Activated naive CD4-positive, alpha-beta T cell treated with anti-CD3 and anti-CD28 coated beads for 36 hours (primary cell): ENCODE measurements at regions of chr1 and their contacts with region 1.

Region 1: DNA sequence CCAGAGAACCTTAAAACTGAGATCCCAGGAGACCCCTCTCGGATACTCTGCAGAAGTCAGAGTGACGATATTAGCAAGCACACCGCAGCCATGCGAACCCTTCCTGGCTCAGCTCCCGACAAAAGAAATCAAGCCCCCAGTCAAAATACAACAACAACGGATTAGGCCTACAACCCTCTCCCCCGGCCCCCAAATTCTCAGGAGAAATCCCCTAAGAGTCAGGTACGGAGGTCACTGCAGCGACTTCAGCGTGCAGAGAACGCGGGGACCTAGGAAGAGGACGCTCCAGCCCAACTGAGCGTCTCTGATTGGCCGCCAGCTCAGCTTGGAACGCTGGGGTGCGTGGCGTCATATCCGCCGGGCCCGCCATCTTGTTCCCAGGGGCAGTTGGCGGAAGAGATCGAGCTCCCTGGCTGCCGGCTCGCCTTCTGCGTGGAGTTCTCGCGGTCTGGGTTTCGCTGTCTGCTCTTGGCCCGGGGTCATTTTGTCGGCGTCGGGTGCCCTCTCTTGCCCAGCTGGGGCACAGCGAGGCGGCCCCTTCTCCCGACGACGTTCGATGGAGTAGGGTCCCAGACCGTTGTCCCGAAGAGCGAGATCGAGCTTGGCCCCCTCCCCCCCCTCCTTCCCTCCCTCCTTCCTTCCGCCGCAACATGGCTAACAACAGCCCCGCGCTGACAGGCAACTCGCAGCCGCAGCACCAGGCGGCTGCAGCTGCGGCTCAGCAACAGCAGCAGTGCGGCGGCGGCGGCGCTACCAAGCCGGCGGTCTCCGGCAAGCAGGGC is at the start of gene PRPF38B:
- DNase-seq: peak; percentile 97
- H3K4me3 Mint-ChIP-seq: peak within 1 kb of the TSS; percentile 86
- H3K27ac Mint-ChIP-seq: peak within 1 kb of the TSS; percentile 98
- H3K4me1 Mint-ChIP-seq: peaks cover 37% of the 10 kb centered on the region
- H3K27me3 Mint-ChIP-seq: no peaks in the 10 kb centered on the region
- total RNA-seq, gene PRPF38B: 50.4 to 52.2 TPM

Region 2: GRCh38 chr1:108590957-108591356 is 101.2 kb before region 1 on chr1:
- CTCF ChIA-PET with region 1: no interaction called
- intact Hi-C with region 1: loop called (anchors 1 kb)
- DNase-seq: no peak
- H3K4me3 Mint-ChIP-seq: no peak overlapping the region
- H3K27ac Mint-ChIP-seq: no peak overlapping the region
- H3K4me1 Mint-ChIP-seq: peaks cover 33% of the 10 kb centered on the region
- H3K27me3 Mint-ChIP-seq: no peaks in the 10 kb centered on the region

Region 3: DNA sequence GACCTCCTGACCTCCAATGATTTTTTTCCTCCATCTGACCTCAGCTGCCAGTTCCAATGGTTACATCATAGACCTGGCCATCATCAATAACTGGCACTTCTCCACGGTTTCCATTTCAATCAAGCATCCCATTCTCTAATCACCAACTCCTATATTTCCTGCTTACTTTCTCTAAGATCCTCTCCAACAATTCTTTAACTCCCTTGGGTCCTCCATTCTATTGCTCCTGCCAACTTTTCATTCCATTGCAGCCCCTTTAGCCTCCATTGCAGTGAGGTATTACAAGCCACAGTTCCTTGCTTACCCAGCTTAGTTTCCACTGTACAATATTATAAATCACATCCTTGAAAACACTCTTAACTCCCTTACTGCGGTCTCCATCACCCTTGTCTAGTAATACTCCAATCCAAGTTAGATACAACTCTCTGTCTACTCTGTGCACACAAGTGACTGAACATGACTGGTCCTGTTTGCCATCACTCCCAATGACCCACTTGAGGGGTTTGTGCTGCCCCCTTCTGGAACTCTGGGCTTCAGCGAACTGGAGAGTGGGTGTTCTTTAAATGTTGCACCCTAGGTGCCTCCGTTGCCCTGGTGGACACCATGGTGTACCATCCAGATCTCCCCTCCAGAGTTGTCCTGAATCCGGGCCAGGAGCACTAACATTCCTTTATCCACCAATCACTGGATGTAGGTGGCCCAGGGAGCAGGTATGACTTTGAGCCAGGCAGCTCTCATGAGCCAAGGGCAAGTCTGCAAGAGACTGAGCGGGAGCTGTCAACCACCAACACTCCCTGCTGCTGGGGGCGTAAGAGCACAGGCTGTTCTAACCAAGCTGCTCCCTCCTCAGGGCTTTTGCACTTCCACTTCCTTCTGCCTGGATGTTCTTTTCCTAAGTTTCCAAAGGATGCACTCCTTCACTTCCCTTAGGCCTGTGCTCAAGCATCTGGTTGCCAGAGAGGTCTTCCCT is 16.8 kb after region 1 on chr1:
- CTCF ChIA-PET with region 1: interaction called, 8 read pairs
- intact Hi-C with region 1: loop called (anchors 1 kb)
- DNase-seq: peak; percentile 81
- H3K4me3 Mint-ChIP-seq: no peak overlapping the region
- H3K27ac Mint-ChIP-seq: no peak overlapping the region
- H3K4me1 Mint-ChIP-seq: peaks cover 11% of the 10 kb centered on the region
- H3K27me3 Mint-ChIP-seq: no peaks in the 10 kb centered on the region

Region 4: GRCh38 chr1:108846001-108846400 is 153.9 kb after region 1 on chr1:
- CTCF ChIA-PET with region 1: no interaction called
- intact Hi-C with region 1: no loop called
- DNase-seq: no peak
- H3K4me3 Mint-ChIP-seq: no peak overlapping the region
- H3K27ac Mint-ChIP-seq: no peak overlapping the region
- H3K4me1 Mint-ChIP-seq: no peaks in the 10 kb centered on the region
- H3K27me3 Mint-ChIP-seq: no peaks in the 10 kb centered on the region

Region 5: GRCh38 chr1:108865038-108865910 is 173.1 kb after region 1 on chr1:
- CTCF ChIA-PET with region 1: no interaction called
- intact Hi-C with region 1: no loop called
- DNase-seq: no peak
- H3K4me3 Mint-ChIP-seq: no peak overlapping the region
- H3K27ac Mint-ChIP-seq: no peak overlapping the region
- H3K4me1 Mint-ChIP-seq: no peaks in the 10 kb centered on the region
- H3K27me3 Mint-ChIP-seq: peaks cover 5% of the 10 kb centered on the region

Region 6: GRCh38 chr1:108877348-108878159 is 185.4 kb after region 1 on chr1:
- CTCF ChIA-PET with region 1: no interaction called
- intact Hi-C with region 1: loop called (anchors 2 kb)
- DNase-seq: no peak
- H3K4me3 Mint-ChIP-seq: peak overlapping the region; percentile 89
- H3K27ac Mint-ChIP-seq: no peak overlapping the region
- H3K4me1 Mint-ChIP-seq: peaks cover 4% of the 10 kb centered on the region
- H3K27me3 Mint-ChIP-seq: peaks cover 25% of the 10 kb centered on the region

Region 7: DNA sequence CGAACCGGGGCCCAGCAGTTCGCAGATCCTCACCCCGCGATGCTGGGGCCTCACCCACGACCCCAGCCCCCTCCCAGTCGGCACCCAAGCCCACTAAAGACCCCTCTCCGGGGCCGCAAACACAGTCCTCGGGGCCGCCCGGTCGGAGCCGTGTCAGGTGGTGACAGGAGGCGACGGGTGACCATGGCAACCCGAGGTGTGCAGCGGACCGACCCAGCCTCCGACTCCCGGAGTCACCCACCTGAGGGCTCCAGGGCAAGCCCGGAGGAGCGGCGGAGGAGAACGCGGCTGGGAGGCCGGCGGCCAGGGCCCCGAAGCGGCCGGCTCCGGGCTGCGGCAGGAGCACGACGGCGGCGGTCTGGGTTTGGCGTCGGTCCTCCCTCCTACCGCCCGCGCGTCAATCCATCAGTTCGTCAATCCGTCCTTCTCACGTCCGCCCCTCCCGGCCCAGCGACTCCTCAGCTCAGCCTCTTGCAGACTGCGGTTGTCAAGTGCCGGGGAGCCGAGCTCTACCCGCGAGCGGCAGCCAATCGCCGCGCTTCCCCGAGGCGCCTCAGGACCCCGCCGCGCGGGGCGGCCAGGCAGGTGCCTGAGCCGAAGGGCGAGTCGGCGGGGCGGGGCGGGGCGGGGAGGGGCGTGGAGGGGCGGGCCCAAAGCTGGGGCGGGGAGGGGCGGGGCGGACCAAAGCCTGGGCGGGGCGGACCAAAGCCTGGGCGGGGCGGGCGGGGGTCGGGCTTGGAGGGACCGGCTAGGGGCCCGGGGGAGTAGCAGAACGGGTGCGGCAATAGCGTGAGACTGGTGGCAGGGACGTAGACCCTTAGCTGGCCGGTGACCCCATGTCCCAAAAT is 349.7 kb after region 1 on chr1 and contains the start of gene WDR47:
- CTCF ChIA-PET with region 1: no interaction called
- intact Hi-C with region 1: loop called (anchors 5 kb)
- DNase-seq: peak; percentile 97
- H3K4me3 Mint-ChIP-seq: peak within 1 kb of the TSS; percentile 73
- H3K27ac Mint-ChIP-seq: peak within 1 kb of the TSS; percentile 6
- H3K4me1 Mint-ChIP-seq: peaks cover 12% of the 10 kb centered on the region
- H3K27me3 Mint-ChIP-seq: no peaks in the 10 kb centered on the region
- total RNA-seq, gene WDR47: 8.2 to 8.4 TPM

Region 8: GRCh38 chr1:109112652-109113285 is 420.6 kb after region 1 on chr1:
- CTCF ChIA-PET with region 1: no interaction called
- intact Hi-C with region 1: loop called (anchors 1 kb)
- DNase-seq: peak; percentile 93
- H3K4me3 Mint-ChIP-seq: peak overlapping the region; percentile 80
- H3K27ac Mint-ChIP-seq: no peak overlapping the region
- H3K4me1 Mint-ChIP-seq: peaks cover 40% of the 10 kb centered on the region
- H3K27me3 Mint-ChIP-seq: peaks cover 4% of the 10 kb centered on the region

Region 9: DNA sequence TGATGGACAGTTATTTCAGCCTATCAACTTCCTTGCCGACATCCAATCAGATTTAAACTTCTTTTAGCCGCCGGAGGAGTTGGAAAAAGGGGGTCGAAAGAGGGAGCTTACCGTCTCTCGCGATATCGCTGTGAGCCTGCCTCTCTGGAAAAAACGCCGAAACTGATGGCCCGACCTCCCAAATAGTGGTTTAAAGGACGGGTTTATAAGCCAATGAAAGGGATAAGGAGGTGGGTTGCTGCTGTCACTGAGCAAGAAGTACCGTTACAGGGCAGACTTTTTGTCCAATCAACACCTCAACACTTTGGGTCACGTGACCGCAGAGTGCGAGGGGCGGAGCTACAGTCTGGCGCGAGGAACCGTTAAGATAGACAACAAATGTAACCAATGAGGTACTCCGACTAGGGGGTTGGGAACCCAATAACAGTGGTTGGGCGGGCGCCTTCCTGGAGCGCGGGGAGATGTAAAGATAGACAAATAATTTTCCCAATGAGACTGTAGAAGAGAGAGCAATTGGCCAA is 1646.8 kb after region 1 on chr1 and contains the start of gene RBM15:
- CTCF ChIA-PET with region 1: no interaction called
- intact Hi-C with region 1: loop called (anchors 2 kb)
- DNase-seq: peak; percentile 99
- H3K4me3 Mint-ChIP-seq: no peak within 1 kb of the TSS
- H3K27ac Mint-ChIP-seq: no peak within 1 kb of the TSS
- H3K4me1 Mint-ChIP-seq: peaks cover 48% of the 10 kb centered on the region
- H3K27me3 Mint-ChIP-seq: no peaks in the 10 kb centered on the region
- total RNA-seq, gene RBM15: 91.0 to 91.5 TPM